ENCODE measurements at regions of chr17 and their contacts with region 1.

Region 1: GRCh38 chr17:66165513-66166123 is 26.3 kb downstream of the CEP112 start:
- DNase-seq: no peak
- H3K4me3 Mint-ChIP-seq: no peak overlapping the region
- H3K27ac Mint-ChIP-seq: no peak overlapping the region
- H3K4me1 Mint-ChIP-seq: peaks cover 12% of the 10 kb centered on the region
- H3K27me3 Mint-ChIP-seq: no peaks in the 10 kb centered on the region

Region 2: DNA sequence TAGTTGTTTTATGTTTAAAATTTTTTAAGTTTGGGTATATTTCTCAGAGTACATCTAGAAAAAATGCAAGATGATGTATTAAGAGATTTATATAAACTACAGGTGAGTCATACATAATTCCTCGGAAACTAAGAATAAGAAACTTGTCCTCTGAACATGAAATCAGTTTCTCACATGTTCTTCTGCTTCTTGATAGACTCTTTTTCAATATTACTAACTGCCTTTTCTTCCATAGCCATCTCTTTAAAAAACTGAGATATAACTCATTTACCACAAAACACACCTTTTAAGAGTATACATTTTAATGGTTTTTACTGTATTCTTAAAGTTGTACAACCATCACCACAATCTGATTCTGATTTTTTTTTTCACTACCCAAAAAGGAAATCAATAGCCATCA is 365.7 kb before region 1 on chr17:
- CTCF ChIA-PET with region 1: interaction called, 4 read pairs
- POLR2A ChIA-PET with region 1: no interaction called
- intact Hi-C with region 1: loop called (anchors 1 kb)
- DNase-seq: no peak
- H3K4me3 Mint-ChIP-seq: no peak overlapping the region
- H3K27ac Mint-ChIP-seq: peak overlapping the region; percentile 82
- H3K4me1 Mint-ChIP-seq: peaks cover 26% of the 10 kb centered on the region
- H3K27me3 Mint-ChIP-seq: no peaks in the 10 kb centered on the region